CD4-positive, alpha-beta memory T cell (primary cell): ENCODE measurements at regions of chr15 and their contacts with region 1.

Region 1: DNA sequence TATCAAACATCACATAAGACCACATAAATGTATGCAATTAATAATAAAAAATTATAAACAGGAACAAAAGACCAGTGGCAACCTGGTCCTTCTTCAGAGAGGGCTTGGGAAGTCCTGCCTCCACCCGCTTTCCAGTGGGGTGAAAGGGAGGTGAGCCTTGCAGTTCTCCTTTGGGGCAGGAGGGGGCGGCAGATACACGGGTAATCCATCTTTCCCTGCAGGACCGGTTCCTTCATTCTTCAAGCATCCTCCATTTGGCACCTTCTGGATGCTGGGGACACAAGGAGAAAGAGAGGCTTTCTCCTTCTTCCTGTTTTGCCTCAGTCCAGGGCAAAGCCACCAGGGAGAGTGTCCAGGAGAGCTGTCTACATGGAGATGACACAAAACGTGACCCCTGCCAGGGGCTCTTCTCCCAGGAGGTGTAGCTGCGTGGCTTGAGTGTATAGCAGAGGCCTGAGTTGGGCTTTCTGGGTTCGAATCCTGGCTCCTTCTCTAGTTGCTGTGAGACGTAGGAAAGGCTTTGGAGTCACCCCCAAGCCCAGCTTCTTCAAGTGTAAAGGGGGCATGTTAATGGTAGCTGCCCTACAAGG is 23.2 kb downstream of the RPLP1 start:
- DNase-seq: peak; percentile 64 to 73 (median 69)
- H3K4me3 ChIP-seq: no peak overlapping the region
- H3K4me3 Mint-ChIP-seq: no peak overlapping the region
- H3K27ac ChIP-seq: no peak overlapping the region
- H3K27ac Mint-ChIP-seq: no peak overlapping the region
- H3K4me1 ChIP-seq: peaks cover 4% of the 10 kb centered on the region
- H3K4me1 Mint-ChIP-seq: peaks cover 0 to 4% (median under 1%) of the 10 kb centered on the region in 4 donors
- H3K27me3 ChIP-seq: no peaks in the 10 kb centered on the region
- H3K27me3 Mint-ChIP-seq: peaks cover 0 to 1% of the 10 kb centered on the region in 2 donors

Region 2: GRCh38 chr15:69337133-69337532 is 138.7 kb before region 1 on chr15:
- CTCF ChIA-PET with region 1: no interaction called
- POLR2A ChIA-PET with region 1: no interaction called
- intact Hi-C with region 1: no loop called
- DNase-seq: no peak
- H3K4me3 ChIP-seq: no peak overlapping the region
- H3K4me3 Mint-ChIP-seq: no peak overlapping the region
- H3K27ac ChIP-seq: no peak overlapping the region
- H3K27ac Mint-ChIP-seq: no peak overlapping the region
- H3K4me1 ChIP-seq: no peaks in the 10 kb centered on the region
- H3K4me1 Mint-ChIP-seq: peaks cover 0 to 4% (median 1%) of the 10 kb centered on the region in 4 donors
- H3K27me3 ChIP-seq: no peaks in the 10 kb centered on the region
- H3K27me3 Mint-ChIP-seq: peaks cover 3 to 7% of the 10 kb centered on the region in 2 donors

Region 3: GRCh38 chr15:69462493-69463181 is 13.2 kb before region 1 on chr15:
- CTCF ChIA-PET with region 1: interaction called, 91 read pairs
- POLR2A ChIA-PET with region 1: interaction called, 488 read pairs
- intact Hi-C with region 1: no loop called
- DNase-seq: peak; percentile 87 to 90 (median 89)
- H3K4me3 ChIP-seq: peak overlapping the region; percentile 59 to 76
- H3K4me3 Mint-ChIP-seq: peak overlapping the region; percentile 88 to 95 (median 92)
- H3K27ac ChIP-seq: peak overlapping the region; percentile 80
- H3K27ac Mint-ChIP-seq: peak overlapping the region; percentile 89 to 99 (median 96)
- H3K4me1 ChIP-seq: peaks cover 44% of the 10 kb centered on the region
- H3K4me1 Mint-ChIP-seq: peaks cover 17 to 56% (median 33%) of the 10 kb centered on the region in 4 donors
- H3K27me3 ChIP-seq: no peaks in the 10 kb centered on the region
- H3K27me3 Mint-ChIP-seq: no peaks in the 10 kb centered on the region

Region 4: GRCh38 chr15:69523010-69524001 is 47.4 kb after region 1 on chr15:
- CTCF ChIA-PET with region 1: no interaction called
- POLR2A ChIA-PET with region 1: no interaction called
- intact Hi-C with region 1: no loop called
- DNase-seq: peak; percentile 38 to 63 (median 53)
- H3K4me3 ChIP-seq: no peak overlapping the region
- H3K4me3 Mint-ChIP-seq: no peak overlapping the region
- H3K27ac ChIP-seq: no peak overlapping the region
- H3K27ac Mint-ChIP-seq: peak overlapping the region in 1 of 7 donors; percentile 33
- H3K4me1 ChIP-seq: no peaks in the 10 kb centered on the region
- H3K4me1 Mint-ChIP-seq: no peaks in the 10 kb centered on the region
- H3K27me3 ChIP-seq: no peaks in the 10 kb centered on the region
- H3K27me3 Mint-ChIP-seq: peaks cover 3 to 5% of the 10 kb centered on the region in 2 donors

Region 5: GRCh38 chr15:69548395-69549180 is 72.7 kb after region 1 on chr15:
- CTCF ChIA-PET with region 1: no interaction called
- POLR2A ChIA-PET with region 1: no interaction called
- intact Hi-C with region 1: no loop called
- DNase-seq: no peak
- H3K4me3 ChIP-seq: no peak overlapping the region
- H3K4me3 Mint-ChIP-seq: no peak overlapping the region
- H3K27ac ChIP-seq: no peak overlapping the region
- H3K27ac Mint-ChIP-seq: no peak overlapping the region
- H3K4me1 ChIP-seq: no peaks in the 10 kb centered on the region
- H3K4me1 Mint-ChIP-seq: no peaks in the 10 kb centered on the region
- H3K27me3 ChIP-seq: no peaks in the 10 kb centered on the region
- H3K27me3 Mint-ChIP-seq: peaks cover 12 to 13% of the 10 kb centered on the region in 2 donors

Region 6: DNA sequence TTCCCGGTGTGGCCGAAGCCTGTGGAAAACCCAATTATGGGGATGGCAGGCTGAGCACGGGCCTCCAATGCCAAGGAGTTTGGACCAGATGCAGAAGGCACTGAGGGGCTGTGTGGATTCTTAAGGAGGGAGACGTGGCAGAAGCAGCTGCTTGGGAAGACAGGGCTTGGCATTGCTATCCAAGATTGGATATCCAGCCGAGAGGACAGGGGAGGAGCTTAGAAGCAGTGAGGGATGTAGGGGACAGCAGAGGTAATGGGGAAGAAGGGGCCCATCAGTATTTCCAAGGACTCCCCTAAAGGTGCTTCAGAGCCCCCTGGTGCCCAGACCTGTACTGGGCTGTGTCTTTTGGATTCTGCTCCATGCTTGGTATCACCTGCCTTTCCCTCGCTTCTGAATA is 734.7 kb after region 1 on chr15:
- CTCF ChIA-PET with region 1: no interaction called
- POLR2A ChIA-PET with region 1: no interaction called
- intact Hi-C with region 1: loop called (anchors 2 kb)
- DNase-seq: no peak
- H3K4me3 ChIP-seq: no peak overlapping the region
- H3K4me3 Mint-ChIP-seq: no peak overlapping the region
- H3K27ac ChIP-seq: no peak overlapping the region
- H3K27ac Mint-ChIP-seq: no peak overlapping the region
- H3K4me1 ChIP-seq: no peaks in the 10 kb centered on the region
- H3K4me1 Mint-ChIP-seq: no peaks in the 10 kb centered on the region
- H3K27me3 ChIP-seq: no peaks in the 10 kb centered on the region
- H3K27me3 Mint-ChIP-seq: no peaks in the 10 kb centered on the region

Region 7: GRCh38 chr15:70512772-70513362 is 1037.0 kb after region 1 on chr15:
- CTCF ChIA-PET with region 1: interaction called, 7 read pairs
- POLR2A ChIA-PET with region 1: no interaction called
- intact Hi-C with region 1: loop called (anchors 1 kb)
- DNase-seq: peak; percentile 55 to 67 (median 59)
- H3K4me3 ChIP-seq: no peak overlapping the region
- H3K4me3 Mint-ChIP-seq: no peak overlapping the region
- H3K27ac ChIP-seq: no peak overlapping the region
- H3K27ac Mint-ChIP-seq: peak overlapping the region in 1 of 7 donors; percentile 43
- H3K4me1 ChIP-seq: peaks cover 20% of the 10 kb centered on the region
- H3K4me1 Mint-ChIP-seq: peaks cover 9 to 28% (median 18%) of the 10 kb centered on the region in 4 donors
- H3K27me3 ChIP-seq: no peaks in the 10 kb centered on the region
- H3K27me3 Mint-ChIP-seq: no peaks in the 10 kb centered on the region

Region 8: DNA sequence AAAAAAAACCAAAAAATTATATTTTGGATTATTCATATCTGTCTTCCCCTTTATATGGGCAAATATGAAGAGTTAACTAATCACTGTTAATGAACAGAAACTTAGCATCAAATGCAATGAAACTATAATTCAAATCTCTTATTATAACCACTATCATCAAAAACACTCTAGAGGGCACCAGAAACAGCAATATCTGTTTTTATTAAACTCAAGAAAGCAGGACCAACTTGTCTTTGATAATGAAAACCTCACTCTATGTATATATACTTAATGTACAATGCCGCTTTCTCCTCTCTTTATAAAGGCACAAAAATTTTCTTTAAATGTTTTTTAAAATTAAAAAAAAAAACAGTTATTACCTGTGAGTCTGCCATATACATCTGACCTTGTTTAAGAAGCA is 1194.8 kb after region 1 on chr15:
- CTCF ChIA-PET with region 1: no interaction called
- POLR2A ChIA-PET with region 1: no interaction called
- intact Hi-C with region 1: no loop called
- DNase-seq: peak in 2 of 5 donors; percentile 14 to 18
- H3K4me3 ChIP-seq: no peak overlapping the region
- H3K4me3 Mint-ChIP-seq: no peak overlapping the region
- H3K27ac ChIP-seq: no peak overlapping the region
- H3K27ac Mint-ChIP-seq: no peak overlapping the region
- H3K4me1 ChIP-seq: peaks cover 26% of the 10 kb centered on the region
- H3K4me1 Mint-ChIP-seq: peaks cover 15 to 25% (median 18%) of the 10 kb centered on the region in 4 donors
- H3K27me3 ChIP-seq: no peaks in the 10 kb centered on the region
- H3K27me3 Mint-ChIP-seq: peaks cover 2 to 5% of the 10 kb centered on the region in 2 donors

Region 9: GRCh38 chr15:70722266-70723121 is 1246.6 kb after region 1 on chr15:
- CTCF ChIA-PET with region 1: interaction called, 31 read pairs
- POLR2A ChIA-PET with region 1: no interaction called
- intact Hi-C with region 1: loop called (anchors 10 kb)
- DNase-seq: peak in 4 of 5 donors; percentile 25 to 39 (median 30)
- H3K4me3 ChIP-seq: no peak overlapping the region
- H3K4me3 Mint-ChIP-seq: no peak overlapping the region
- H3K27ac ChIP-seq: no peak overlapping the region
- H3K27ac Mint-ChIP-seq: no peak overlapping the region
- H3K4me1 ChIP-seq: no peaks in the 10 kb centered on the region
- H3K4me1 Mint-ChIP-seq: peaks cover 0 to 2% (median 0%) of the 10 kb centered on the region in 4 donors
- H3K27me3 ChIP-seq: no peaks in the 10 kb centered on the region
- H3K27me3 Mint-ChIP-seq: peaks cover 13 to 14% of the 10 kb centered on the region in 2 donors